Gastrocnemius medialis (tissue), 4 donors: ENCODE measurements at regions of chr6 and their contacts with region 1.

Region 1: DNA sequence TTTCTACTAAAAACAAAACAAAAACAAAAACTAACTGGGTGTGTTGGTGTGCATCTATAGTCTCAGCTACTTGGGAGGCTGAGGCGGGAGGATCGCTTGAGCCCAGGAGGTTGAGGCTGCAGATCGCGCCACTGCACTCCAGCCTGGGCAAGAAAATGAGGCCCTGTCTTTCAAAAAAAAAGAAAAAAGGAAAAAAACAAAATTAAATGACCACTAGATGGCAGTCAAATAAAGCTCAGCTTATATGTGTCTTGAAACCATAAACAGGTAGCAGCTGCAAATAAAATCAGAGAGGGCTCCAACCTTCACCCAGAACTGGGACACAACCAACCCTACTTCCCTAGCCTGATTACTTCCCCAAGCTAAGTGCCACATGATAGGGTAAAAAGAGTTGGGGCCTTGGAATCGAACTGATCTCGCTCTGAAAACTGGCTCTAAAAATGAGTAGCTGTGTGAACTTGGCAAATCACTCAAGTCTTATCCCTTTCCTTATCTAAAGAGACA is 67.1 kb upstream of the ADGRF4 start:
- DNase-seq: no peak
- ATAC-seq: peak; percentile 68 to 79
- H3K4me3 ChIP-seq: no peak overlapping the region
- H3K27ac ChIP-seq: peak overlapping the region in 3 of 4 donors; percentile 27 to 34 (median 34)
- H3K4me1 ChIP-seq: peaks cover 4 to 7% of the 10 kb centered on the region in 2 donors
- H3K27me3 ChIP-seq: no peaks in the 10 kb centered on the region
- CTCF ChIP-seq: peak; percentile 48 to 83 (median 61)
- POLR2A ChIP-seq: no peak

Region 2: DNA sequence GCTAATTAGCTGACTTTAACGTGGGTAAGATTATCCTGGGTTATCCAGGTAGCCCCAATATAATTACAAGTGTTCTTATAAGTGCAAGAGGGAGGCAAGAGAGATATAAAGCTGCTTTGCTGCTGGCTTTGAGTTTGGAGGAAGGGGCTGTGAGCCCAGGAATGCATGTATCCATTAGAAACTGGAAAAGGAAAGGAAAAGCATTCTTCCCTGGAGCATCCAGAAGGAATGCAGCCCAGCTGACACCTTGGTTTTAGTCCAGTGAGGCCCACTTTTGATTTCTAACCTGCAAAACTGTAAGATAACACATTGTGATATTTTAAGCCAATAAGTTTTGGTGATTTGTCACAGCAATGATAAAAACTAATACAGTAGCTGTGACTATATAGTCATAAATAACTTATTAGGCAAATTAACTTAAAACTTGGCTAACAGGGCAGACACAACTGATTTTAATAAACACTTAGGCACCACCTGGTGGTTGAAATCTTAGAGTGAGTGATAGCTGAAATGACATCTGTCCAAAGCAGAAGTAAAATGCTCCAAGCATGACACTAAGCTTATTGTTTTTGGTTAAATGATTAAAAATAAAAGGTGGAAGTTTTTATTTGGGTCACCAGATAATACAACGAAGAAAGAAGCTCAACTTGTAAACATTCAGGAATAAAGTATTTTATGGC is 102.7 kb after region 1 on chr6:
- in situ Hi-C with region 1: loop called in 1 of 4 experiments (anchors 5 kb)
- intact Hi-C with region 1: loop called (anchors 2 kb)
- DNase-seq: no peak
- ATAC-seq: no peak
- H3K4me3 ChIP-seq: no peak overlapping the region
- H3K27ac ChIP-seq: no peak overlapping the region
- H3K4me1 ChIP-seq: peaks cover 0 to 5% of the 10 kb centered on the region in 2 donors
- H3K27me3 ChIP-seq: no peaks in the 10 kb centered on the region
- CTCF ChIP-seq: peak; percentile 20 to 50 (median 40)
- POLR2A ChIP-seq: no peak

Region 3: DNA sequence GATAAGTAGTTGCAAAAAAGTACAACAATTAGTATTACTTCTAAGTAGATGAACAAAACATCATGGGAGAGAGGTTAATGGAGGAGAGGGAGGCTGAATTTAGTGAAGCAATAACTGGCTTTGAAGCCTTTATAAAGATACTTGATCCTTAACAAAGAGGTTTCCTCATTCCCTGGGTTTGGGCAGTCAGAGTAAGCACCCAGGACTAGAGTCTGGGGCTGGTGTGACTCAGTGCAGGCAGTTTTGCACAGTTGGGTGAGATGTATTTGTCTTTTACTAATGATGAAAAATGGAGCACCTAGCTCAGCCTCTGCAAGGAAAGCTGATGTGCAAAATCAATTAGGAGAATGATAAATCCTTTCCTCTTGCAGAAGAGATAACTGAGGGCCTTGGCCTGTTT is 138.7 kb after region 1 on chr6:
- in situ Hi-C with region 1: loop called in 2 of 4 experiments (anchors 5 to 10 kb)
- intact Hi-C with region 1: no loop called
- DNase-seq: no peak
- ATAC-seq: no peak
- H3K4me3 ChIP-seq: no peak overlapping the region
- H3K27ac ChIP-seq: no peak overlapping the region
- H3K4me1 ChIP-seq: no peaks in the 10 kb centered on the region
- H3K27me3 ChIP-seq: no peaks in the 10 kb centered on the region
- CTCF ChIP-seq: no peak
- POLR2A ChIP-seq: no peak

Region 4: GRCh38 chr6:47780510-47781356 is 149.4 kb after region 1 on chr6:
- in situ Hi-C with region 1: loop called in 3 of 4 experiments (anchors 5 to 10 kb)
- intact Hi-C with region 1: loop called (anchors 1 kb)
- DNase-seq: no peak
- ATAC-seq: peak; percentile 92 to 94
- H3K4me3 ChIP-seq: peak overlapping the region in 1 of 4 donors; percentile 30
- H3K27ac ChIP-seq: no peak overlapping the region
- H3K4me1 ChIP-seq: peaks cover 0 to 7% of the 10 kb centered on the region in 2 donors
- H3K27me3 ChIP-seq: no peaks in the 10 kb centered on the region
- CTCF ChIP-seq: peak; percentile 33 to 65 (median 53)
- POLR2A ChIP-seq: no peak

Region 5: DNA sequence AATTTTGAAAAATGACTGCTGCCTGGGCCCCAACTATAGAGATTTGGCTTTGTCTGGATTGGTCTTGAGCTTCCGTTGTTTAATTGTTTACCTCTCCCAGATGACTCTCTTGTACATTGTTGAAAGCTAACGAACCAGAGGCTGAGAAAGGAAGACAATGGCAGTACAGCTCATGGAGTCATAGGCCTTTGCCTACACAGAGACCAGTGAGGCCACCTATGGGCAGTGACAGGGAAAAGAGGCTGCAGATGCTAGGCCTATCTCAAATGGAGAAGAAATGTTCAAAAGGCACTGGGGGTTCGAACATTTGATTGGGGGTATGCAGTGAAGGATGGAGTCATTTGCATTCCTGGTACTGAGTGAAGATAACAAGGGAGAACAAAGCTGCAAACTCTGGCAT is 179.6 kb after region 1 on chr6:
- in situ Hi-C with region 1: no loop called
- intact Hi-C with region 1: no loop called
- DNase-seq: no peak
- ATAC-seq: no peak
- H3K4me3 ChIP-seq: no peak overlapping the region
- H3K27ac ChIP-seq: no peak overlapping the region
- H3K4me1 ChIP-seq: no peaks in the 10 kb centered on the region
- H3K27me3 ChIP-seq: no peaks in the 10 kb centered on the region
- CTCF ChIP-seq: no peak
- POLR2A ChIP-seq: no peak